GM10248 (cell line): ENCODE measurements at regions of chr3 and their contacts with region 1.

Region 1: GRCh38 chr3:47420511-47421484 is 40.0 kb downstream of the PTPN23 start:
- DNase-seq: peak; percentile 94
- CTCF ChIP-seq: peak; percentile 89

Region 2: GRCh38 chr3:47082519-47082918 is 338.3 kb before region 1 on chr3:
- CTCF ChIA-PET with region 1: no interaction called
- POLR2A ChIA-PET with region 1: no interaction called
- DNase-seq: peak; percentile 31
- CTCF ChIP-seq: no peak

Region 3: GRCh38 chr3:47370887-47371697 is 49.7 kb before region 1 on chr3:
- CTCF ChIA-PET with region 1: no interaction called
- POLR2A ChIA-PET with region 1: no interaction called
- DNase-seq: peak; percentile 79
- CTCF ChIP-seq: peak; percentile 21

Region 4: GRCh38 chr3:47404955-47405790 is 15.6 kb before region 1 on chr3:
- CTCF ChIA-PET with region 1: interaction called, 16 read pairs
- POLR2A ChIA-PET with region 1: no interaction called
- DNase-seq: no peak
- CTCF ChIP-seq: no peak

Region 5: GRCh38 chr3:47440131-47440530 is 19.3 kb after region 1 on chr3:
- CTCF ChIA-PET with region 1: interaction called, 23 read pairs
- POLR2A ChIA-PET with region 1: no interaction called
- DNase-seq: no peak
- CTCF ChIP-seq: peak; percentile 29

Region 6: DNA sequence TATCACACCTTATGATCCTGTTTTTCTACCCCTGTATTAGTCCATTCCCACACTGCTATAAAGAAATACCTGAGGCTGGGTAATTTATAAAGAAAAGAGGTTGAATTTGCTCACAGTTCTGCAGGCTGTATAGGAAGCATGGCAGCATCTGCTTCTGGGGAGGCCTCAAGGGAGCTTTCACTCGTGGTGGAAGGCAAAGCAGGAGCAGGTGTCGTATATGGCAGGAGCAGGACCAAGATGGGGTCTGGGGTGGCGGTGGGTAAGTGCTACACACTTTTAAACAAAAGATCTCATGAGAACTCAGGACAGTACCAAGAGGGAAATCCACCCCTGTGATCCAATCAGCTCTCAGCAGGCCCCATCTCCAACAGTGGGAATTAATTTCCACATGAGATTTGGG is 70.4 kb after region 1 on chr3:
- CTCF ChIA-PET with region 1: interaction called, 10 read pairs
- POLR2A ChIA-PET with region 1: no interaction called
- DNase-seq: no peak
- CTCF ChIP-seq: no peak